AG04450 (cell line): ENCODE measurements at regions of chr10 and their contacts with region 1.

Region 1: GRCh38 chr10:37976091-37976879 is at the start of gene ZNF25:
- DNase-seq: peak; percentile 97
- H3K4me3 ChIP-seq: peak within 1 kb of the TSS; percentile 83
- H3K27ac ChIP-seq: peak within 1 kb of the TSS; percentile 48
- H3K27me3 ChIP-seq: no peaks in the 10 kb centered on the region
- CTCF ChIP-seq: peak; percentile 94
- polyA plus RNA-seq, gene ZNF25: 8.2 and 10.9 TPM in 2 replicates

Region 2: DNA sequence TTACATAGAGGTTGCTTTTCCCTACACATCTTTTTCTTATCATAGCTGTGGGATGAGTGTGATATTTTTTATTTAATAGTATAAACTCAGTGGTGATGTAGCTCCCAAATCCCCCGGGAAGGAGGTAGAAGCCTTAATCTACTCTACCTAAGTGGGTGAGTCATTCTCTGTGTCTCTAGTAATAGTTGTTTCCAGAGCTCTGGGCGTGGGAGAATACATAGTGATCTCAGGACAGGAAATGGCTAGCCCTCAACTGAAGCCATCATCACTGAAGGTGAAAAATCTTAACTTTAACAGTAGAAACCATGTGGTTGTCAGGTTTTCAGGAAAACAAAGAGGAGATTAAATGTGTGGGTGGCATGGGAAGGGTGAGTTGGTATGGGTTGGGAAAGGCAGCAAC is 572.5 kb before region 1 on chr10:
- CTCF ChIA-PET with region 1: interaction called, 11 read pairs
- POLR2A ChIA-PET with region 1: no interaction called
- DNase-seq: no peak
- H3K4me3 ChIP-seq: no peak overlapping the region
- H3K27ac ChIP-seq: no peak overlapping the region
- H3K27me3 ChIP-seq: no peaks in the 10 kb centered on the region
- CTCF ChIP-seq: no peak

Region 3: DNA sequence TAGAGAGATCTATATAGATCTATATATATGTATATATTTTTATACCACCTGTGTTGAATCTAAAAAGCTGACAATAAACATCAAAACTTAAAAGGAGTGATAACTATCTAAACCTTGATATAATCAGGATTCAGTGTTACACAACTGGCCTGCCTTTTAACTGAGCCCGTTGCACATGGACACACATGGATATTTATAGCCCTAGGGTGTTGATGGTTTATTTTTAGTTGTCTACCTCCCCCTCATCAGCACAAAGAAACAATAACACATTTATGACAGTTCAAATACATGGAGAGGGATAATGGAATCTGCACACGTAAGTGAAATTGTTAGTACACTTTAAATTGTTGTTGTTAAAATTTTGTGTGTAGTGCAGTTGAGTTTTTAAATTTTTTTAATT is 455.8 kb before region 1 on chr10:
- CTCF ChIA-PET with region 1: no interaction called
- POLR2A ChIA-PET with region 1: no interaction called
- DNase-seq: no peak
- H3K4me3 ChIP-seq: no peak overlapping the region
- H3K27ac ChIP-seq: no peak overlapping the region
- H3K27me3 ChIP-seq: no peaks in the 10 kb centered on the region
- CTCF ChIP-seq: no peak

Region 4: GRCh38 chr10:37860494-37861190 is 115.6 kb before region 1 on chr10:
- CTCF ChIA-PET with region 1: interaction called, 18 read pairs
- POLR2A ChIA-PET with region 1: interaction called, 7 read pairs
- DNase-seq: peak; percentile 47
- H3K4me3 ChIP-seq: no peak overlapping the region
- H3K27ac ChIP-seq: no peak overlapping the region
- H3K27me3 ChIP-seq: no peaks in the 10 kb centered on the region
- CTCF ChIP-seq: no peak

Region 5: DNA sequence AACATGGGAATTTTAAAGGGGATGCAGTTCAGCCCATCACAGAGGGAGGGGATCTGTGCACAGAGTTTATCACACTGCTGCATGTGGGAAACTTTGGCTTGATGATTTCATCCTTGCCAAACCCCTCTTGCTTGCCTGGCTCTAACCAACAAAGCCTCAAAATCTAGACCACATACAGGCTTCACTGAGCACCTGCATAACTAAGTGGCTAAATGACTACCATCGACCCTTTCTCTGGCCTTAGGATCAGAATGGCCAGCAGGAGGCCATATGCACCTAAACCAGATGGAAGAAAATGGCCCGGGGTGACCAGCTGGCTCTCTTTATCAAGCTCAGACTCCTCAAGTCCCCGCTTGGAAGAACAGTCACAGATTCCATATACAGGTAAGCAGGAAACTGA is 15.8 kb after region 1 on chr10:
- CTCF ChIA-PET with region 1: interaction called, 15 read pairs
- POLR2A ChIA-PET with region 1: interaction called, 5 read pairs
- DNase-seq: no peak
- H3K4me3 ChIP-seq: no peak overlapping the region
- H3K27ac ChIP-seq: no peak overlapping the region
- H3K27me3 ChIP-seq: peaks cover 2% of the 10 kb centered on the region
- CTCF ChIP-seq: no peak

Region 6: GRCh38 chr10:38010119-38010903 is 34.0 kb after region 1 on chr10 and contains the start of gene ZNF33A:
- CTCF ChIA-PET with region 1: interaction called, 15 read pairs
- POLR2A ChIA-PET with region 1: interaction called, 3 read pairs
- DNase-seq: peak; percentile 62
- H3K4me3 ChIP-seq: peak within 1 kb of the TSS; percentile 83
- H3K27ac ChIP-seq: peak within 1 kb of the TSS; percentile 97
- H3K27me3 ChIP-seq: no peaks in the 10 kb centered on the region
- CTCF ChIP-seq: no peak
- polyA plus RNA-seq, gene ZNF33A: 7.4 and 10.5 TPM in 2 replicates